ENCODE measurements at regions of chr2 and their contacts with region 1.

Region 1: GRCh38 chr2:101205521-101205998 is 47.1 kb upstream of the CNOT11 start:
- DNase-seq: peak; percentile 89
- H3K4me3 Mint-ChIP-seq: peak overlapping the region; percentile 39
- H3K27ac Mint-ChIP-seq: peak overlapping the region; percentile 63
- H3K4me1 Mint-ChIP-seq: no peaks in the 10 kb centered on the region
- H3K27me3 Mint-ChIP-seq: no peaks in the 10 kb centered on the region
- CTCF ChIP-seq: peak; percentile 39

Region 2: DNA sequence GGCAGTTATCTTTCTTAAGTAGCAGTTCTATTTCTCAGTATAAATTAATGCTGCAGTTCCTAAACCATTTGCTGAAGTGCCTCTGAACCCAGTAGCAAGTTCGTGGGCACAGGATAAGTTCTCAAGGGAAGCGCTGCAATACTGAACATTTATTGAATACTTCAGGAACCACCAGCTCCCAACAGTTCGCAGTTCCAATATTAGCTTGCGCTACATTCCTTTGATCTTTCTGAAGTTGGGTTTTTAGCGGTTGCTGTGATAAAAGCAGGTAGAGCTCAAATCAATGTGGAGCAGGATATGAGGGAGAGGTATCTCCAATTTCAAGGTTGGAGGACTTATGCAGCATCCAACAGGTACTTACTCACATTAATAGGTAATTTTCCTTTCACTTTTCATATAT is 609.1 kb before region 1 on chr2:
- CTCF ChIA-PET with region 1: no interaction called
- POLR2A ChIA-PET with region 1: no interaction called
- intact Hi-C with region 1: no loop called
- DNase-seq: no peak
- H3K4me3 Mint-ChIP-seq: no peak overlapping the region
- H3K27ac Mint-ChIP-seq: no peak overlapping the region
- H3K4me1 Mint-ChIP-seq: no peaks in the 10 kb centered on the region
- H3K27me3 Mint-ChIP-seq: no peaks in the 10 kb centered on the region
- CTCF ChIP-seq: no peak

Region 3: GRCh38 chr2:101001691-101002561 is 203.6 kb before region 1 on chr2 and contains the start of gene RPL31:
- CTCF ChIA-PET with region 1: interaction called, 18 read pairs
- POLR2A ChIA-PET with region 1: interaction called, 5 read pairs
- intact Hi-C with region 1: no loop called
- DNase-seq: peak; percentile 98
- H3K4me3 Mint-ChIP-seq: peak within 1 kb of the TSS; percentile 92
- H3K27ac Mint-ChIP-seq: peak within 1 kb of the TSS; percentile 99
- H3K4me1 Mint-ChIP-seq: peaks cover 19% of the 10 kb centered on the region
- H3K27me3 Mint-ChIP-seq: no peaks in the 10 kb centered on the region
- CTCF ChIP-seq: no peak
- total RNA-seq, gene RPL31: 1,648 and 1,732 TPM in 2 replicates

Region 4: GRCh38 chr2:101012706-101013181 is 192.8 kb before region 1 on chr2:
- CTCF ChIA-PET with region 1: interaction called, 56 read pairs
- POLR2A ChIA-PET with region 1: interaction called, 14 read pairs
- intact Hi-C with region 1: loop called (anchors 1 kb)
- DNase-seq: peak; percentile 60
- H3K4me3 Mint-ChIP-seq: no peak overlapping the region
- H3K27ac Mint-ChIP-seq: no peak overlapping the region
- H3K4me1 Mint-ChIP-seq: peaks cover 3% of the 10 kb centered on the region
- H3K27me3 Mint-ChIP-seq: no peaks in the 10 kb centered on the region
- CTCF ChIP-seq: peak; percentile 63

Region 5: DNA sequence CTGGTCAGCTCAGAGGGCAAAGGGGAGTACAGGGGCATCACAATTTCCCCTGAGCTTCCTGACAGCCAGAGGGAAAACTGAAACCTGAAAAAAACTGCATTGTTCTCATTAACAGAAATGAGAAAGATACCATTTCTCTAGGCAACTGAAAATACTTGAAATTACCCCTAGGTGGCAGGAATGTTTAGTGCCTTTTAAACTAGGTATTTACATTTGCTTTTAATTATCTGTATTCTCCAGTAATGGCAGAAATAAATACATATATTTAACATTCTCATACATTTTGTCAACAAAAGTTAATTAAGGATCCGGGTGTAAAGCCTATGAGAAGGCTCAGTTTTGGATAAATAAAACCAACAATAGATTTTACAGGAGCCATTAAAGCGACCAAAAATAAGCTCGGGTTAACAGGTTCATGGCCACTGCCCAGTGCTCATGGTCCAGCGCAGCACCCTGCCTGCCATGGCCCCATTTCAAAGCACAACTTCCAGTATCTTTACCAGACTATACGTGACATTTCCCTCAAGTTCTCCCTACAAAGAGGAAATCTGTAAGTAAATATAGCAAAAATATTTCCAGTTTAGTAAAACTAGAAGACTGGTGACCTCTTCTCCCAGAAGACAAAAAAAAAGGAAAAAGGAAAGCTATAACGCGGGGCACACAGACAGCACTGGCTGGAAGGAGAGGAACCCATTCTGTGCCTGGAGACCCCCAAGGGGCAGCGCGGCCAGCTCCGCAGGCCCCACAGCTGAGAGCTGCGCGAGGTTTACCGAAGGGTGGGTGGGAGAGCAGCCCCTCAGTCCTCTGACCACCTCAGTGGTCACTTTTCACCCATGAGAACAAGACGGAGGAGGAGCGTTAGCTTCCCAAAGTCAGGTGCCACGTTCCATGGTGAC is 168.8 kb before region 1 on chr2:
- CTCF ChIA-PET with region 1: interaction called, 69 read pairs
- POLR2A ChIA-PET with region 1: interaction called, 4 read pairs
- intact Hi-C with region 1: loop called (anchors 1 kb)
- DNase-seq: peak; percentile 35
- H3K4me3 Mint-ChIP-seq: no peak overlapping the region
- H3K27ac Mint-ChIP-seq: no peak overlapping the region
- H3K4me1 Mint-ChIP-seq: peaks cover 5% of the 10 kb centered on the region
- H3K27me3 Mint-ChIP-seq: no peaks in the 10 kb centered on the region
- CTCF ChIP-seq: peak; percentile 53

Region 6: DNA sequence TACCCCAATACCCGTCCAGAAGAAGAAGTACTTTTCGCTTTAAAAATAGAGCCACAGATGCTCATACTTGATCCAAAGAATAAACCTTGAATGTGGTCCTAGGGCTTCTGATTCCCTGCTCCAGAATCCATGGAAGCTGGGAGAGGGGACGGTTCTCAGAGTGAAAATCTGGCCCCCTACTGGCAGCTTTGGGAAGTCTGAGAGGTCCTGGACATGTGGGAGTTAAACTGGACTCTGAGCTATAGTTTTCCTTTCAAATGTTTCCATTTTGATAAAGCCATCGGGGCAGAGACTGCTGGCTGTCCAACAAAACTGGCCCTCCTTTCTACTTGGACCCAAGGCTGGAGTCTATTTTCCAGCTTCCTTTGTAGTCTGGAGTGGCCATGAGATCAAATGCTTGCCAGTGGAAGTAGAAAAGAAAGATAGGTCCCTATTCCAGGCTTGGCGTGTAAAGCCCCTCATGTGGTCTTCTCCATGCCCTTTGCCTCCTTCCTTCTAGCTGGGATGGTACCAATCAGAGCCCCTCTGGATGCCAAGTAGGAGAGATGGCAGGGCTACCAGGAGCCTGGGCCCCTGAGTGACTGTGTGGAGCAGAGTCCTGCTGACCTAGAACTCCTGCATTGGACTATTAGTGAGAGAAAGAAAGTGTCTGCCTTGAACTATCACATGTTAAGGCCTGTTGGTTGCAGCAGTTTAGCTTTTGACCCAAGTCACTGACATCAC is 16.7 kb before region 1 on chr2:
- CTCF ChIA-PET with region 1: interaction called, 84 read pairs
- POLR2A ChIA-PET with region 1: interaction called, 19 read pairs
- intact Hi-C with region 1: no loop called
- DNase-seq: peak; percentile 42
- H3K4me3 Mint-ChIP-seq: no peak overlapping the region
- H3K27ac Mint-ChIP-seq: no peak overlapping the region
- H3K4me1 Mint-ChIP-seq: peaks cover 16% of the 10 kb centered on the region
- H3K27me3 Mint-ChIP-seq: no peaks in the 10 kb centered on the region
- CTCF ChIP-seq: peak; percentile 31

Region 7: DNA sequence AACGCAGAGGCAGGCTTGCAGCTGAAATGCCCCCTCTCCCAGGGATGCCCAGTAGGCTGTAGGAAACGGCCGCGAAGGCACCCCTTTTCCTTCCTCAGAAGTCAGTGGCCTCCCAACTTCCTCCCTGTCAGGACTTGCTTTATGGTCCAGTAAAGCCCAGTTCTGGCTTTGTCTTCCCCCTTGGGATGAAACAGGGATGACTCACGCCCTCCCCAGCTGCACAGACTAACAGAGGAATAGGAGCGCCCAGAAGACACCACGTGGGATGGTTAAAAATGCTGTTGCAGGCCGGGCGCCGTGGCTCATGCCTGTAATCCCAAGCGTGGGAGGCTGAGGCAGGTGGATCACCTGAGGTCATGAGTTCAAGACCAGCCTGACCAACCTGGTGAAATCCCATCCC is 174.8 kb after region 1 on chr2:
- CTCF ChIA-PET with region 1: no interaction called
- POLR2A ChIA-PET with region 1: no interaction called
- intact Hi-C with region 1: no loop called
- DNase-seq: peak; percentile 94
- H3K4me3 Mint-ChIP-seq: no peak overlapping the region
- H3K27ac Mint-ChIP-seq: no peak overlapping the region
- H3K4me1 Mint-ChIP-seq: peaks cover 9% of the 10 kb centered on the region
- H3K27me3 Mint-ChIP-seq: no peaks in the 10 kb centered on the region
- CTCF ChIP-seq: no peak

Region 8: DNA sequence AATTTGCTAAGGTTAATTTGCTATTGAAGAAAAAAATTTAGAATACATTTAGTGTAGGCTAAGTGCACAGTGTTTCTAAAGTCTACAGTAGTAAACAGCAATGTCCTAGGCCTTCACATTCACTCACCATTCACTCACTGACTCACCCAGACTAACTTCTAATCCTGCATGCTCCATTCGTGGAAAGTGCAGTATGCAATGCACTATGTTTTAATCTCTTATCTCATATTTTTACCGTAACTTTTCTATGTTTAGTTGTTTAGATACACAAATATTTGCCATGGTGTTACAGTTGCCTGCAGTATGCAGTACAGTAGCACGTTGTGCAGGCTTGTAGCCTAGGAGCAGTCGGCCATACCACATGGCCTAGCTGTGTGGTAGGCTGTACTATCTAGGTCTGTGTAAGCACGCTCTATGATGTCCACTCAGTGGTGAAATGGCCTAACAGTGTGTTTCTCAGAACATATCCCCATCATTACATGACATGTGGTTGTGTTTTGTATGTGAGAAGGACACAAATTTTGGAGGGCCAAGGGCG is 287.4 kb after region 1 on chr2:
- CTCF ChIA-PET with region 1: no interaction called
- POLR2A ChIA-PET with region 1: no interaction called
- intact Hi-C with region 1: no loop called
- DNase-seq: no peak
- H3K4me3 Mint-ChIP-seq: no peak overlapping the region
- H3K27ac Mint-ChIP-seq: no peak overlapping the region
- H3K4me1 Mint-ChIP-seq: no peaks in the 10 kb centered on the region
- H3K27me3 Mint-ChIP-seq: no peaks in the 10 kb centered on the region
- CTCF ChIP-seq: no peak

Measured in MCF 10A (cell line).